SK-N-SH (cell line): ENCODE measurements at regions of chr1 and their contacts with region 1.

Region 1: GRCh38 chr1:157496121-157496526 is 56.2 kb downstream of the FCRL5 start:
- DNase-seq: peak; percentile 42
- H3K4me3 ChIP-seq: no peak overlapping the region
- H3K27ac ChIP-seq: no peak overlapping the region
- H3K4me1 ChIP-seq: no peaks in the 10 kb centered on the region
- H3K27me3 ChIP-seq: peaks cover 16% of the 10 kb centered on the region; the same call in 1 of the 2 replicates
- CTCF ChIP-seq: peak; percentile 80
- EP300 ChIP-seq: no peak
- RAD21 ChIP-seq: peak; percentile 60

Region 2: DNA sequence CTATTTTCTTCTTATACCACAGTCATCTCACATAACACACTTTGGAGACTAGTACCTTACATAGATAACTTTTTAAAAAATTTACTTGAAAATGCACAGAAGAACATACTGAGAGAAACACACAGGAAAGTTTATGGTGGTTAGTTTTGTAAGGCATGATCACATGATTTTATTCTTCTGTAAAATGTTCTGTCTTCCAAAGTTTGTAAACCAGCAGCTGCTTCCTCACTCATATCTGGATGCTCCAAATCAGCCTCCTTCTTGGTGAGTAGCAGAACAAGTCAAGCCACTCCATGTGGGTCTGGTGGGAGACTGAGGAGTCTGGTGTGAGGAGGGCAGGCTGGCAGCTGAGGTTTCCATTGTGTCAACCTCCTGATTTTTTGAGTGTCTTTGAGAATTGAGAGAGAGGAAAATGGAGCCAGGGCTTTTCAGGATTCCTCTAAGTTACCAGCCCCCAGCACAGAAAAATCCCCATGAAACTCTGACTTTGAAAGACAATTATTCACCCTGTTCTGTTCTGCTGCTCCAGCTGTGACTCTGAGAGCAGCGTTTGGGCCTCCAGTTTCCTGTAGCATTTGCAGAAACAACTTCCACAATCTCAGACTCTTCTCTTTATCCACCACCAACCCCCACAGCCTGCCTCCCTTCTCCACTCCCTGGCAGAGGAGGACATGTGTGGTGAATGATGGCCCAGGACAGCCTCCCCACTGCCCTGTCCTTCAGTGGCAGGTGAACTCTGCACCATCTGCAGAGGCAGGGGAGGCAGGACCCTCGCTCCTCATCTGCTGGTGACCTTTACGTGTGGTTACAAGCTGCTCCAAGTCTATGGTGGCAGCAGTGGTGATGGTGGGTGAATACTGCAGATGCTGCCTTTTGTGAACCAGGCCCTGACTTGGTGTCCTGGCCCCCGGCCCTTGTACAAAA is 26.1 kb before region 1 on chr1:
- CTCF ChIA-PET with region 1: no interaction called
- POLR2A ChIA-PET with region 1: no interaction called
- DNase-seq: no peak
- H3K4me3 ChIP-seq: no peak overlapping the region
- H3K27ac ChIP-seq: no peak overlapping the region
- H3K4me1 ChIP-seq: no peaks in the 10 kb centered on the region
- H3K27me3 ChIP-seq: 0 out of 2 replicates have a peak, but pooled peaks cover 11% of the 10 kb centered on the region
- CTCF ChIP-seq: no peak
- EP300 ChIP-seq: no peak
- RAD21 ChIP-seq: no peak

Region 3: DNA sequence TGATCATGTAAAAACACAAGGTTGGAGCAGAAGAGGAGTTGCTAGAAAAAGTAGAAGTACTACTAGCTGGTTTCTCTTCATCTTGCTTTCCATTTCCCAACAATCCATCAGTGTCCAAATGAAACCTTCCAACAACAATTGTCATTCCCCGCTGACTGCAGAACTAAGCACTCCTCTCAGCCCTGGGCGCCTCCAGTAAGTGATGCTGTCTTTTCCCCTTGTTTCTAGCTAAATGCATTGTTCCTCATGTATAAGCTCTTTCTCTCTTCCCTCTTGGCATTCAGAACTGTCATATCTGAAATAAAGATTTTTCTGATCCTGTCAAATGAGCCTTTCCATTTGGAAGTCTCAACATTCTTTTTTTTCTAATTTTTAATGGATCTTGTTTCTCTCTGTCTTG is 12.5 kb before region 1 on chr1:
- CTCF ChIA-PET with region 1: interaction called, 10 read pairs
- POLR2A ChIA-PET with region 1: no interaction called
- DNase-seq: no peak
- H3K4me3 ChIP-seq: no peak overlapping the region
- H3K27ac ChIP-seq: no peak overlapping the region
- H3K4me1 ChIP-seq: no peaks in the 10 kb centered on the region
- H3K27me3 ChIP-seq: peaks cover 14% of the 10 kb centered on the region
- CTCF ChIP-seq: no peak
- EP300 ChIP-seq: no peak
- RAD21 ChIP-seq: no peak

Region 4: DNA sequence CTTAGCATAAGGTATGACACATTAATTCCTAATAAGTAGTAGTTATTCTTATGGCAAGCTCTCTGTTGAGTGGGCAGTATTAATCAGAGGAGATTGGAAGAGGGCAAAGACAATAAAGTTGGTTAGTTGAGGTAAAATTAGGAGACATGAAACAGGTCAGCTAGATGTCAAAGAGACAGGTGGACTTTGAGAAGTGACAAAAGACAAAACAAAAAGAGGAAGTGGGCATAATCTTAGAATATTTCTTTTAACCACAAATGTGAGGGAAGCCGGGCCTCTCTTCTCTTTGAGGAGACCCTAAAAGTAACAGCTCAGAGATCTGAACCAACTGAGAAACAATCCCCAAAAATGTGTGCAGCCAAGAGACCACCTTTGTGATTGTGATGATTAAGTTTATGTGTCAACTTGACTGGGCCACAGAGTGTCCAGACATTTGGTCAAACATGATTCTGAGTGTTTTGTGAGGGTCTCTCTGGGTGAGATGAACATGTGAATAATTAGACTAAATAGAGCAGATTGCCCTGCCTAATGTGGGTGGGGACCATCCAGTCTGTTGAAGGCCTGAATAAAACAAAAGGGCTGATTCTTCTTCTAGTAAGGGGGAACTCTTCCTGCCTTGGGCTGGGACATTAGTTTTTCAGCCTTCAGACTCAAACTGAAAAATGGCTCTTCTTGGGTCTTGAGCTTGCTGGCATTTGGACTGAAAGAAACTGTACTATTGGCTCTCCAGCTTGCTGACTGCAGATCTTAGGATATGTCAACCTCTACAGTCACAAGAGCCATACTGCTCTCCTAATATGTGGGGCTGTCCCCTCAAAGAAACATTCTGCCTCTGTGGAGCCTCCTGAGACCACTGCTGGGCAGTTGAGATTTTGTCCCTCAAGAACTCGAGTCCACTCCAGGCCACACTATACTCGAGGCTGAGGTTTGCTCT is 16.2 kb after region 1 on chr1:
- CTCF ChIA-PET with region 1: interaction called, 21 read pairs
- POLR2A ChIA-PET with region 1: no interaction called
- DNase-seq: no peak
- H3K4me3 ChIP-seq: no peak overlapping the region
- H3K27ac ChIP-seq: no peak overlapping the region
- H3K4me1 ChIP-seq: no peaks in the 10 kb centered on the region
- H3K27me3 ChIP-seq: peaks cover 20% of the 10 kb centered on the region; the same call in 1 of the 2 replicates
- CTCF ChIP-seq: no peak
- EP300 ChIP-seq: no peak
- RAD21 ChIP-seq: no peak